ENCODE measurements at regions of chr9 and their contacts with region 1.

Region 1: DNA sequence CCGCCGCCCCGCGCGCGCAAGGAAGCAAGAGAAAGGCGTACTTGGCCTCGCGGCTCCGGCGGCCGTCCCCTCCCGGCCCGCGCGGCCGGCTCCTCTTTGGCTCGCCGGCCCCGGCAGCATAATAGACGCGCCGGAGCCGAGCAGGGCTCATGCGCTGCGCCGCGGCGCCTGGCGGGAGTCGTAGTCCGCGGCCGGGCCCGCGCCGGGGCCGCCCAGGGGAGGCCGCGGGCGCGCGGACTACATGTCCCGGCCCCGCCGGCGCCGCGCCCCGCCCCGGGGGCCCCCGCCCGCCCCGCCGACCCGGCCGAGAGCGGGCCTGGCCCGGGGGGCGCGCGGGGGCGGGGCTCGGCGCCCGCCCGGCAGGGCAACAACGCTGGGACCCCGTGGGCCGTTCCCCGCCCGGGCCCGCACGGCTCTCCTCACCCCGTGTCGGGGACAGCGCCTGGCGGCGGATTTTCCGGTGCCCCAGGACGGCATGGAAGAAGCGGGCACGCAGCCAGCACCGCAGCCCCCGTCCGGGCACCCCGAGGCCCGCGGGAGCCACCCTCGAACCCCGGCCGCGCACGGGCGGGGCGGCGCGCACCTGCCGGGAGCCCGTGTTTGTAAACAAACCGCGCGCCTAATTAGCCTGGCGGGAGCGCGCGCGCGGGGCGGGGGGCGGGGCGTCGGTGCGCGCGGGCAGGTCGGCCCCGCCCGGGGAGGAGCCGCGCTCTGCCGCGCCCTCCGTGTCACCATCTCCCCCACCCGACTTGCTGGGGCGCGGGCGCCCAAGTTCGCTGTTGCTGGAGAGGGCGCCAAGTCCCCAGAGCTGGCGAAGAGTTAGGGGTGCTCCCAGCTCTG is at the start of gene BRD3:
- DNase-seq: peak; percentile 82
- H3K4me3 Mint-ChIP-seq: peak within 1 kb of the TSS; percentile 90
- H3K27ac Mint-ChIP-seq: peak within 1 kb of the TSS; percentile 89
- H3K4me1 Mint-ChIP-seq: peaks cover 14% of the 10 kb centered on the region
- H3K27me3 Mint-ChIP-seq: peaks cover 18% of the 10 kb centered on the region
- total RNA-seq, gene BRD3: 34.2 and 36.7 TPM in 2 replicates

Region 2: GRCh38 chr9:133149126-133150107 is 918.7 kb before region 1 on chr9:
- intact Hi-C with region 1: loop called (anchors 5 kb)
- DNase-seq: peak; percentile 76
- H3K4me3 Mint-ChIP-seq: peak overlapping the region; percentile 81
- H3K27ac Mint-ChIP-seq: peak overlapping the region; percentile 81
- H3K4me1 Mint-ChIP-seq: peaks cover 31% of the 10 kb centered on the region
- H3K27me3 Mint-ChIP-seq: peaks cover 3% of the 10 kb centered on the region

Region 3: GRCh38 chr9:133492061-133493021 is 575.8 kb before region 1 on chr9:
- intact Hi-C with region 1: no loop called
- DNase-seq: no peak
- H3K4me3 Mint-ChIP-seq: no peak overlapping the region
- H3K27ac Mint-ChIP-seq: no peak overlapping the region
- H3K4me1 Mint-ChIP-seq: no peaks in the 10 kb centered on the region
- H3K27me3 Mint-ChIP-seq: no peaks in the 10 kb centered on the region

Region 4: DNA sequence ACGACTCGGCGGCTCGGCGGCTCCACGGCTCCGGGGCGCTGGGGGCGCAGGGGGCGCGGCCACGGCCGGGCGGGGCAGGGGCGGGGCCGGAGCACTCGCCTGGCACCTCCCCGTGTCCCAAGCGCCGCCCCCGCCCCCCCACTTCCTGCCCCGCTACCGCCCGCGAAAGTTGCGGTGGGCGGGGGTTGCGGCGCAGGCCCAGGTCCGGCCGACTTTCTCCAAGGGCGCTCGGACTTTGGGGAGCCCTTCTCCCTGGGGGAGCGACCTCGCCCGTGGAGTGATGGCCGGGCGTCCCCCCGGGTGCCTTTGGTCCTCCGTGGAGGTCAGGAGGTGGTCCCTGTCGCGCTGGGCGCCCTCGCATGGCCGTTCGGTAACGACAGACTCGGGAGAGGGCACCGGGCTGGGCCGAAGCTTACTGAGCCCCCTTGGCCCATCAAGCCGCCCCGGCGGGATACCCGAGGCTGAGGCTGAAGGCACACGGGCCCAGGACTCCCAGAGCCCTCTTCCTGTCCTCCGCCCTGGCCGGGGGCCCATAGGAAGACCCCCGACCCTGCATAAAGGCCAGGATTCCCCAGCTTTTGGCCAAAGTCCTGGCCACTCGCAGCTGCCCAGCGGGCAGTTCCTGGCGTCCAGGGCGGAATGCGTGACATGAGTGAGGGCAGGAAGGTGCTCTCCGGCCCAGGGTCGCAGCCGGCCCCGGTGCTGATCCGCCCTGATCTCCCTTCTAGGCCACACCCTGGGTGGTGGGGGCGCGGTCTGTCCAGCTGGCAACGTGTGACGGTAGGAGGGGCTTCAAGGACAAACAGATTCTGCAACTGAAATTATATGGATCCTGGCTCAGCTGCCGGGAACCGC is 75.1 kb before region 1 on chr9:
- intact Hi-C with region 1: loop called (anchors 1 kb)
- DNase-seq: peak; percentile 49
- H3K4me3 Mint-ChIP-seq: peak overlapping the region; percentile 72
- H3K27ac Mint-ChIP-seq: no peak overlapping the region
- H3K4me1 Mint-ChIP-seq: no peaks in the 10 kb centered on the region
- H3K27me3 Mint-ChIP-seq: peaks cover 19% of the 10 kb centered on the region

Region 5: GRCh38 chr9:134088063-134088725 is 20.1 kb after region 1 on chr9:
- intact Hi-C with region 1: no loop called
- DNase-seq: no peak
- H3K4me3 Mint-ChIP-seq: no peak overlapping the region
- H3K27ac Mint-ChIP-seq: no peak overlapping the region
- H3K4me1 Mint-ChIP-seq: no peaks in the 10 kb centered on the region
- H3K27me3 Mint-ChIP-seq: peaks cover 16% of the 10 kb centered on the region

Region 6: GRCh38 chr9:134099123-134099787 is 31.1 kb after region 1 on chr9:
- intact Hi-C with region 1: loop called (anchors 1 kb)
- DNase-seq: peak; percentile 36
- H3K4me3 Mint-ChIP-seq: no peak overlapping the region
- H3K27ac Mint-ChIP-seq: peak overlapping the region; percentile 33
- H3K4me1 Mint-ChIP-seq: no peaks in the 10 kb centered on the region
- H3K27me3 Mint-ChIP-seq: peaks cover 7% of the 10 kb centered on the region

Region 7: GRCh38 chr9:134141906-134142305 is 73.8 kb after region 1 on chr9:
- intact Hi-C with region 1: no loop called
- DNase-seq: no peak
- H3K4me3 Mint-ChIP-seq: no peak overlapping the region
- H3K27ac Mint-ChIP-seq: no peak overlapping the region
- H3K4me1 Mint-ChIP-seq: peaks cover 19% of the 10 kb centered on the region
- H3K27me3 Mint-ChIP-seq: no peaks in the 10 kb centered on the region

Region 8: GRCh38 chr9:134163353-134164196 is 95.5 kb after region 1 on chr9:
- intact Hi-C with region 1: loop called (anchors 1 kb)
- DNase-seq: peak; percentile 61
- H3K4me3 Mint-ChIP-seq: no peak overlapping the region
- H3K27ac Mint-ChIP-seq: no peak overlapping the region
- H3K4me1 Mint-ChIP-seq: peaks cover 10% of the 10 kb centered on the region
- H3K27me3 Mint-ChIP-seq: no peaks in the 10 kb centered on the region

Region 9: GRCh38 chr9:135961277-135961705 is 1893.2 kb after region 1 on chr9 and contains the start of gene UBAC1:
- intact Hi-C with region 1: loop called (anchors 5 kb)
- DNase-seq: peak; percentile 93
- H3K4me3 Mint-ChIP-seq: peak within 1 kb of the TSS; percentile 87
- H3K27ac Mint-ChIP-seq: peak within 1 kb of the TSS; percentile 82
- H3K4me1 Mint-ChIP-seq: peaks cover 25% of the 10 kb centered on the region
- H3K27me3 Mint-ChIP-seq: peaks cover 8% of the 10 kb centered on the region
- total RNA-seq, gene UBAC1: 41.9 and 42.0 TPM in 2 replicates

Measured in activated T-helper 1 cell treated with anti-CD3 and anti-CD28 coated beads, Interleukin-12 subunit alpha, Interleukin-12 subunit beta, Interleukin-2, Interleukin-4 antibody, amounts not matched to agents 30 ng/mL and 10 ng/mL and 1 ng/mL, durations not matched to agents 14 hours and 24 hours and 36 hours (primary cell).